Activated CD8-positive, alpha-beta memory T cell treated with anti-CD3 and anti-CD28 coated beads, Interleukin-2, amount 10 ng/mL, durations not matched to agents 7 days and 5 days (primary cell): ENCODE measurements at regions of chr7 and their contacts with region 1.

Region 1: DNA sequence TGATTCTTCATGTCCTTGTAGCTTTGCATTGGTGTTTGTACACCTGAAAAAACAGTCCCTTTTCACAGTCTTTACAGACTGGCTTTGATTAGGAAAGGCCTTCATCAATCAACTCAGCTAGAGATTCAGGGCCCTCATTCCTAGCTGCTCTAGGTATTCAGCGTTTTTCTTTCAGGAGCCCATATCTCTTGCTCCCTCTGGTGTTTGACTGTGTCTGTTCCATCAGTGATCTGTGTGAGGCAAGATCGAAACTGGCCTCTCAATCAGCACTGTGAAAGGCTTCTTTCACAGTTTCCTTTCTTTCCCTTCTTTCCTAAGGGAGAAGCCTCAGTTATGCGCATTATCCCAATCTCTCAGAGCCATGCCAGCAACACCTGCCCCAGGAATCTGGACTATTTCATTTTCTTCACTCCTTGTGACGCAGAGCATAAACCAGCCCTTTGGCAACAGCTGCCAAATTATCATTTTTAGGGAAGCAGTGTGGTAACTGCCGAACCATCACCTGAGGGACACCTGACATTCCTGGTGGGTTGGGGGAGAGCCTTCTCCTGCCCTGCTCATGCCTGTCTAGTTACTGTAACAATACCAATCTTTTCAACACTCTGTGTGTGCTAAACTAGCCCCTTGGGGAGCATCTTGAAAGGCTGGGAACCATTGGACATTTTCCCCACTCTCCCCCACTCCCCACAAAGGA is 75.7 kb upstream of the CCDC71L start:
- DNase-seq: peak; percentile 66
- ATAC-seq: peak; percentile 98
- H3K4me3 Mint-ChIP-seq: peak overlapping the region; percentile 24
- H3K27ac Mint-ChIP-seq: peak overlapping the region; percentile 54
- H3K4me1 Mint-ChIP-seq: peaks cover 28% of the 10 kb centered on the region
- H3K27me3 Mint-ChIP-seq: no peaks in the 10 kb centered on the region

Region 2: DNA sequence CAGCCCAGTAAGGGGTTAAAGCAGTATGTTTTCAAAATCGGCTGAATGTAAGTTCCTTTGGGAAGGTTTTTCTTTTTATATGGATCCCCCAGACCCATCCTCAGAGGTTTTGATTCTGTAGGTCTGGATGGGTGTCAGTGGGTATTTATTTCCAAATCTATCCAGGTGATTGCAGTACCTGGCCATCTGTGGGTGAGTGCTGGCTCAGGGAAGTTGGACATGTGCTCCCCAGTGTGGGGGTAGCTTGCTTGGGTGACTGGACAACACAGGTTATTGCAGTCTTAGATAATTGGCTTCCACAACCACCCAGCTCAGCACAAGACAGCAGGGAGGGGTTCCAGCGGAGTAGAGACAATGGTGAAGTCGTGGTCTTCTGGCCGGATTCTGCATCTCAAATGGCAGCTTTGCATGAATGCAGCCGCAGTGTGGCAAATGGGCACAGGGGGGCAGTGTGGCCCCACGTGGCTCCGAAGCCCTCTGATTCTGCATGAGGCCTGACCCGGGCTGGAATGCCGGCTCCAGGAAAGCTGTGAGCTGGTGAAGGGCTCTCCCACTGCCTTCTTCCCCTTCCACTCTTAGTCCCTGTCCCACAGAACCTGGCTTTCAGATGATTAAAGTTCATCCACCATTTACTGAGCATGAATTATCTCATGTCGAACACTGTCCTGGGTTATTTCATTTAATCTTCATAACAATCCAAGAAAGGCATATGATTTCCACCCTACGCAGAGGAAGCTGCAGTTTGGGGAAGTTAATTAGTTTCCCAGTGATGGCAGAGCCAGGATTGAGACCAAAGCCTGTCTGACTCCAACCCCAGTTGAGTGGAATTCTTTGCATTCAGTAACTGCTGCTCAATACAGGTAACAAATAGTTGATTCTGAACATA is 560.0 kb before region 1 on chr7:
- CTCF ChIA-PET with region 1: interaction called, 16 read pairs
- DNase-seq: peak; percentile 77
- ATAC-seq: peak; percentile 81
- H3K4me3 Mint-ChIP-seq: no peak overlapping the region
- H3K27ac Mint-ChIP-seq: no peak overlapping the region
- H3K4me1 Mint-ChIP-seq: peaks cover 3% of the 10 kb centered on the region
- H3K27me3 Mint-ChIP-seq: peaks cover 24% of the 10 kb centered on the region

Region 3: GRCh38 chr7:106542550-106543220 is 194.0 kb before region 1 on chr7:
- CTCF ChIA-PET with region 1: interaction called, 10 read pairs
- DNase-seq: peak; percentile 53
- ATAC-seq: peak; percentile 64
- H3K4me3 Mint-ChIP-seq: no peak overlapping the region
- H3K27ac Mint-ChIP-seq: no peak overlapping the region
- H3K4me1 Mint-ChIP-seq: peaks cover 10% of the 10 kb centered on the region
- H3K27me3 Mint-ChIP-seq: peaks cover 6% of the 10 kb centered on the region

Region 4: DNA sequence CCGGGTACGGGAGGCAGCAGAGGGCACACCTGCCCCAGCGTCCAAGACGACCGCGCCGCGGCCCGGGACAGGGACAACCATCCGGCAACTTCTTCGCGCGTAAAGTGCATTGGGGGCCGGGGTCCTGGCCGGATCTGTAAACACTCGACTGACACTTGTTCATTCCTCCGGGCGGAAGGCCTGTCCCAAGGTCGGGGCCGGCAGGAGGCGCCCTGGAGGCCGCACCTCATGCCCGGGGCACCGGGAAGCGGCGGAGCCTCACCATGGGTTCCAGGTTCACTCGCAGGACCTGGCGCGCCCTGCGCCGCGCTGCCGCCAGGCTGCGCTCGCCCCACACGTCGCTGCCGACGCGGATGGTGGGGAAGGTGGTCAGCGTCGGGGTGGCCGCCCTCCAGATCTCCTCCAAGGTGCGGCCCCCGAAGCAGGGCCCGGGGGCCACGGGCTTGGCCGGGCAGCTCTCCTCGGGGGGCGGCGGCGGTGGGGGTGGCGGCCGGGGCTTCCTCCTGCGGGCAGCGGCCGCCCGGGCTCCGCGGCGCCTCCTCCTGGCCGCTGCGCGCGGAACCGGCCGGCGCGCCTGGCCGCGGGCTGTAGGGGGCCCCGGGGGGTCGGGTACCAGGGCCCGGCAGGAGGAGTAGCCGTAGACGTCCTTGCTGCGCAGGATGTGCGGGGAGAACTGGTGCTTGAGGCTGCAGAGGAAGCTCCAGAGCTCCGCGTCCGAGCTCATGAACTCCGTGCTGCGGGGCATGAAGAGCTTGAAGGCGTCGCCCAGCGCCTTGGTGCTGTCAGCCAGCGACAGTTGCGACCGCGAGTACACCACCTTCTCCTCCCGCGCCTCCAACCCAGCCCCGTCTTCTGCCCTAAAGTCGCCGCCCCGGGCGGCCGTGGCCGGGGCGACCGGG is 76.4 kb before region 1 on chr7:
- CTCF ChIA-PET with region 1: interaction called, 104 read pairs
- DNase-seq: peak; percentile 89
- ATAC-seq: peak; percentile 70
- H3K4me3 Mint-ChIP-seq: peak overlapping the region; percentile 78
- H3K27ac Mint-ChIP-seq: peak overlapping the region; percentile 89
- H3K4me1 Mint-ChIP-seq: peaks cover 26% of the 10 kb centered on the region
- H3K27me3 Mint-ChIP-seq: no peaks in the 10 kb centered on the region

Region 5: GRCh38 chr7:106679153-106679931 is 57.3 kb before region 1 on chr7:
- CTCF ChIA-PET with region 1: interaction called, 12 read pairs
- DNase-seq: peak; percentile 63
- ATAC-seq: peak; percentile 88
- H3K4me3 Mint-ChIP-seq: no peak overlapping the region
- H3K27ac Mint-ChIP-seq: peak overlapping the region; percentile 42
- H3K4me1 Mint-ChIP-seq: peaks cover 16% of the 10 kb centered on the region
- H3K27me3 Mint-ChIP-seq: no peaks in the 10 kb centered on the region

Region 6: DNA sequence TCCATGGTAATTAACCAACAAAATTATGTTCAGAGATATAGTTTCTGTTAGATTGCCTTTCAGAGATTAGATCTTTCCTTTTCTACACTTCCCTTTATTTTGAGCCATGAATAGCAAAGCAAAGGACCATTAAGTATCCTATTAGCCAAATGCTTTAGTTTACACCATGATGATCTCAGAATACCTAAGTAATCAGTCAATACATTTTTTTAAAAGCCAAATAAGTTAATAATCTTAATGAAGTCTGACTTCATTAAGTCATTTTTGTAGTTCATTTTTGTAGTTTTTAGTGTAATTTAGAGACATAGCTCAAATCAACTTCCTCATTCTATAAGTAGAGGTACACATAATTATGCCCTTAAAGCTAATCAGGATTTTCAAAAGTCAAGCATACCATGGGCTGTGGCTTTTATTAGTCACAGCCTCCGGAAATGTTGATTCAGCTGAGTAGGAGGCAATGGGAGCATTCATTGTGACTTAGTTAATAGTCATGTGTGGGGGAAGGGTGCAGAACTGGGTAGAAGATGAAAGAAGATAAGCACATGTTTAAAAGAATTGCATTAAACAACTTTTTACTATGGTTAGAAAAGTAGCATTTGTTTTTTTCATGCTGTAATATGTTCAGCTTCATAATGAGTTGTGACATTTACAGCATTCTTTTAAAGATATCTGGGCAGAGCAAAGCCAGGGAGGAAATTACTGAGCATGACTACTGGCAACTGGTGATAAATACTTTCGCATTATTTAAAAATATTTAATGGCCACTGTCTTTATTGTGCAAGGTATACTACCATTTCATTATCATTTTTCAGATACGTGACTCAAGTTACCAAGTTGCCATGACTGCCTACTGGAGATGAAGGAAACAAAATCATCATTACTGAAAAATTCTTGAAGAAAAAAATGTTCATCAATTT is 18.4 kb before region 1 on chr7:
- CTCF ChIA-PET with region 1: interaction called, 33 read pairs
- DNase-seq: peak; percentile 82
- ATAC-seq: peak; percentile 100
- H3K4me3 Mint-ChIP-seq: no peak overlapping the region
- H3K27ac Mint-ChIP-seq: no peak overlapping the region
- H3K4me1 Mint-ChIP-seq: peaks cover 10% of the 10 kb centered on the region
- H3K27me3 Mint-ChIP-seq: no peaks in the 10 kb centered on the region

Region 7: GRCh38 chr7:106883456-106884026 is 146.9 kb after region 1 on chr7:
- CTCF ChIA-PET with region 1: no interaction called
- DNase-seq: no peak
- ATAC-seq: no peak
- H3K4me3 Mint-ChIP-seq: no peak overlapping the region
- H3K27ac Mint-ChIP-seq: no peak overlapping the region
- H3K4me1 Mint-ChIP-seq: peaks cover 17% of the 10 kb centered on the region
- H3K27me3 Mint-ChIP-seq: no peaks in the 10 kb centered on the region